Posterior cingulate gyrus (tissue), 11 donors: ENCODE measurements at regions of chr7 and their contacts with region 1.

Region 1: DNA sequence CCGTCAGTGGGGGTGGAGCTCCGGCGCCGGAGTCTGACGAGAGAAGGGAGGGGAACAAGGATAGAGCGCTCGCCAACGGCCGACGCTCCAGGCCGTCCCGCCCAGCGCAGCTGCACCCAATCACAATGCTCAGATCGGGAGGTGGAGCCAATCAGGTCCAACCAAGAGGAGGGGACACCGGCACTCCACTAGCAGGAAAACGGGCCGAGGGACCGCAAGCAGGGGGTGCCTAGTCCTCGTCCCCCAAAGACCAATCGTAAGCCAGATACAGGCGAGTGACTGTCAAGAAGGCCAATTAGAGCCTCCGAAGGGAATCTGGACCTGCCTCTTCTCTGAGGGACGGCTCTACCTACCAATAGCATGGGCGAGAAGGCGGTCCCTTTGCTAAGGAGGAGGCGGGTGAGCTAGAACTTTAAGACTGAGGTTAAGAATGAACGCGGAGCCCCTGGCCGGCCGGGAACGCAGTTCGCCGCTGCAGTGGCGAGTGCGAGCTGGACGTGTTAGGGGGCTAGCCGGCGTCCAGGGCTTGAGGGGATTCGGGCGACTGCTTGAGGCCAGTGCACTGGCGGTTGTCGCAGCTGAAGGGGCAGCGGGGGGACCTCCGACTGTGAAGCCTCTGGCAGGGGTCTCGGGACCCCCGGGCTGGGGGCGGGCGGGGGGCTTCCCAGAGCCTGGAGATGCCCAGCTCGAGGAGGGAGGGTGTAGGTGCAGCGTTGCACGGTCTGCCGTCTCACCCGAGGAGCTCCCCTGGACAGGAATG is at the start of gene FBXO24:
- DNase-seq: peak; percentile 99 to 100 (median 100)

Region 2: DNA sequence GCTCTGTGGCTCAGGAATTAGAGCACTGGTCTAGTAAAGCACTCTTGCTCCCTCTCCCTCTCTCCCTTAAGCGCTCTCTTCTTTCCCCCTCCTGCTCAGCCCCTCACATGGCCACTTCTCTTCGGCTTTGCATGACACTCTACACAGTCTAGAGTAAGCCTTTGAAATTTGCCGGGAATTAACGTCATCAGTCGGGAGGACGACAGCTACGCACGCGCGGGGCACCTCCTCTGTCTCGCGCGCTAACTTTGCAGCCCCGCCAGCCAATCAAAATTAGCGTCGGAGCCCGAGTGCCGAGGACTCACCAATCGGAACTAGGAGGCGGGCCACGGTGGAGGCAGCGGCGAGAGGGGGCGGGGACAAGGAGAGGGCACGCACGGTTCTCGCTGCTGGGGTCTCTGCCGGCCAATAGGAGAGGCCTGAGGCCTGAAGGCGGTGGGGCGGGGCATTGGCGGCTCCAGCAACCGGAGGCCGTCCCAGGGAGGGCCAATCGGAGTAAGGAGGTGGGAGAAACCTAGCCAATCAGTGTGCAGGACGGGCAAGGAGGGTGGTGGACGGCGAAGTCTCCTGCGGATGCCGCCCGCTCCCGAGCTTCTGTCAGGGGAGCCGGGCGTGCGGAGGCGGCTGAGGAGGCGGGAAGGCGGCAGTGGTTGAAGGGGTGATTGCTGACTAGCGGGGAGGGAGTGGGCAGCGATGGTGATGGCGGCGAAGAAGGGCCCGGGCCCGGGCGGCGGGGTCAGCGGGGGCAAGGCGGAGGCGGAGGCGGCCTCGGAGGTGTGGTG is 47.6 kb before region 1 on chr7 and contains the start of gene AGFG2:
- intact Hi-C with region 1: no loop called
- DNase-seq: peak; percentile 100

Region 3: GRCh38 chr7:100611974-100612729 is 25.7 kb after region 1 on chr7 and contains the start of gene MOSPD3:
- intact Hi-C with region 1: no loop called
- DNase-seq: peak; percentile 97 to 100 (median 98)

Region 4: DNA sequence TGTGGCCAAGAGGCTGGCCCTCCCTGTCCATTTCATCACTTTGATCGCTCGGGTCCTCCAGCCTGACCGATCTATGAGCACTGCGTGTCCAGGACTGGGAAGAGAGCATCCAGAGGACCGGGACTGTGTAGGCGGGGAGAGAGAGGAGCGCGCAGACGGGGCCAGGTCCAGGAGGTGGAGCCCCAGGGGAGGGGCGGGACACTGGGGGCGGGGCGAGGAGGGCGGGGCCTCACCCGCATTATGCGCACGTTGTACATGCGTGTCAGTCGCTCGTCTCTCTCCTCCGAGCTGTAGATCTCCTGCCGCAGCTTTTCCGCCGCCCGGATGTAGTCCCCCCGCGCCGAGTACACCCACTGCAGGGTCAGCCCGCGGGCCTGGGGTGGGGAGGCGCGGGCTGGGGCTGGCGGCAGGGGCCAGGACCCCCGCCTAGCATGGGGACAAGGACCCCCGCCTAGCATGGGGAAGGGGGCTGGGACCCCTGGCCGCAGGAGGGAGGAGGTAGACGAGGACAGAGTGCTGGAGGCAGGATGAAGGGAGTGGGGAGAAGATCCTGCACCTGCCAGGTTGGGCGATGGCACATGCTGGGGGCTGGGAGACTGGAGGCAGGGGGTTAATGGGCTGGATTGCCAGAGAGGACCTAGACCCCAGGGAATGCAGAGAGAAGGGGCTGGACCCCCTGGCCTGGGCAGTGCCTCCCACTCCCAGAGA is 40.2 kb after region 1 on chr7:
- intact Hi-C with region 1: no loop called
- DNase-seq: peak; percentile 35 to 96 (median 80)

Region 5: DNA sequence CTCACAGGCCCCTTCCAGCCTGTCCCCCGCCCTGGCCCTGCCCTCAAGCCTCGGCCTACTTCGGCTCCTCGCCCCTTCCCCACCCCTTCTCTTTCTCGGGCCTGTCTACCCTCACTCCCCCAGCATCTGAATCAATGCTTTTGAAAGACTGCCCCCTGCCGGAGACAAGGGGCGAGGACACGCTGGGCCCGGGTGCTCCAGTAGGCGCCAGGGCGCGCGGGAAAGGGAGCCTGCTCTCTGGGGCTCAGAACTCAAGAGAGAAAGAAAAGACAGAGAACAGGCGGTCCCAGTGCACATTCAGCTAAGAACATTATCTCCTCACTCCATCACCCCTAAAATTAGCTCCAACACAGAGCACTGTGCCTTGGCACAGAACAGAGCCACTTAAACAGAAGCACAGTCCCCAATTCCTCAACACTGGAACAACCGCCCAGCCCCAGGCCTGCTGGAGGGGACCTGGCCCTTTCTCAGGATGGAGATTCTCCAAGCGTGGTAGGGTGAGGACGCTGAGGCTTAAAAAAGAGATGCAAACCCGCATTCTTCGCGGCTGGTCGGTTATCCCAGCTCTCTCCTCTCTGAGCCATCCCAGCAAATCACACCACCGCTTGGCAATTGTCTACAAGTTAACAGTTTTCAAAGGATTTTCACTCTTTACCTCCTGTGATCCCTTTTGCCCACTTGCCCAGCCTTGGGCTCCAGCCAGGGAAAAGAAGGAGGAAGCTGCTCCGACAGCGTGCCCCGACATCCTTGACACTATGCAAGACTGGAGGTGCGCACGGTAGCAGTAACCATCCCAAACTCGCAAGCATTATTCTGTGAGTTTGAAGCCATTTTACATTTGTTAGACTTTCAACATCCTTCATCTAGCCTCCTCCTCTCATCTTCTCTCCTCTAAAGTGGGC is 105.5 kb after region 1 on chr7:
- intact Hi-C with region 1: loop called (anchors 5 kb)
- DNase-seq: peak; percentile 67 to 97 (median 85)